CD4-positive, alpha-beta memory T cell (primary cell): ENCODE measurements at regions of chr2 and their contacts with region 1.

Region 1: GRCh38 chr2:9630749-9631483 is at the start of gene YWHAQ:
- DNase-seq: peak; percentile 97 to 98 (median 97)
- H3K4me3 ChIP-seq: peak within 1 kb of the TSS; percentile 45 to 86
- H3K4me3 Mint-ChIP-seq: peak within 1 kb of the TSS; percentile 94 to 98 (median 96)
- H3K27ac ChIP-seq: peak within 1 kb of the TSS; percentile 86
- H3K27ac Mint-ChIP-seq: peak within 1 kb of the TSS; percentile 96 to 98 (median 98)
- H3K4me1 ChIP-seq: peaks cover 46% of the 10 kb centered on the region
- H3K4me1 Mint-ChIP-seq: peaks cover 37 to 58% (median 46%) of the 10 kb centered on the region in 4 donors
- H3K27me3 ChIP-seq: no peaks in the 10 kb centered on the region
- H3K27me3 Mint-ChIP-seq: no peaks in the 10 kb centered on the region
- total RNA-seq, gene YWHAQ: 124 TPM

Region 2: DNA sequence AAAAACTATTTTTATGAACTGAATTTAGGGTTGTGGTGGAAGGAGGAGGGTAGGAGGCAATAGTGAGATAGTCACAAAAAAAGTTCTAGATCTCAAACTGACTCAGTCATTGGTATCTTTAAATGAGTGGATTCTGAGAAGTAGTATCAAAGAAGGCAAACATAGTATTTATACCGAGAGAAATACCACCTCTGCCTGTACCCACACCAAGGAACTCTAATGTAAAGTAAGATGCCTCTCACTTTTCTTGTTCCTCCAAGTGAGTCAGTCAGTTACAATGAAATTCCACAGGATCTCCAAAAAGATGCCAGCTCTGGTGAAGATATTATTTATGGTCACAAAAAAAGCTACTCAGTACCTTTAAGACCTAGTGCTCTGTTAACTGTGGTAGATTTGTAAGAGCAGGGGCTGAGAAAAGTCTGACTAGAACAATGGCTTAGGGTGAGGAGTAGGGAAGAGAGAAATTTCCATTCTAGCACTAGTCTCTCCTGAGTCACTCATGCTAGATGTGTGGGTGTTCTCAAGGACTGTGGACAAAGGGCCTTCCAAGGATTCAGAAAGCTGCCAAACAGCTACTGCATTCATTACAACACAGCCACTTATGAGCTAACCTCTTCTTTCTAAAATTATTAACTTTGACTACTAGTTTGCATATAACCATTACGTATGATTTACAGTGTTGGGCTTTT is 36.4 kb before region 1 on chr2:
- CTCF ChIA-PET with region 1: no interaction called
- POLR2A ChIA-PET with region 1: interaction called, 30 read pairs
- intact Hi-C with region 1: no loop called
- DNase-seq: no peak
- H3K4me3 ChIP-seq: no peak overlapping the region
- H3K4me3 Mint-ChIP-seq: peak overlapping the region in 6 of 8 donors; percentile 1 to 35 (median 16)
- H3K27ac ChIP-seq: peak overlapping the region; percentile 5
- H3K27ac Mint-ChIP-seq: peak overlapping the region; percentile 2 to 80 (median 52)
- H3K4me1 ChIP-seq: peaks cover 50% of the 10 kb centered on the region
- H3K4me1 Mint-ChIP-seq: peaks cover 38 to 68% (median 54%) of the 10 kb centered on the region in 4 donors
- H3K27me3 ChIP-seq: no peaks in the 10 kb centered on the region
- H3K27me3 Mint-ChIP-seq: no peaks in the 10 kb centered on the region

Region 3: DNA sequence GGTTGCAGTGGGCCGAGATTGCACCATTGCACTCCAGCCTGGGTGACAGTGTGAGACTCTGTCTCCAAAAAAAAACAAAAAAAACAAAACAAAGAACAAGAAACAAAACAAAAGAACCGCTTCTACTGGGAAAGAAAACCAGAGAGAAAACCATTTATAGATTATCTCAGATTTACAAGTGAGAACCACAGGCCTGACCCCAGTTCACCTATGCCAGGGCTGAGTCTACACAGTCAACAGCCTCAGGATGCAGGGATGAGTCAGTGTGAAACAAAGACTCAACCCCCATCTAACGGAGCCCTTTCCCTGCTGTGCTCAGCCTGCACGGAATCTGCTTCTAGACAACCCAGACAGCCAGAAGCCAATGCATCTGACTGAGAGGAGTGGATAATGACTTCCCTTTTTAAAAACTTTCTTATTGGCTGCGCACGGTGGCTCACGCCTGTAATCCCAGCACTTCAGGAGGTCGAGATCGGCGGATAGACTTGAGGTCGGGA is 25.4 kb after region 1 on chr2:
- CTCF ChIA-PET with region 1: no interaction called
- POLR2A ChIA-PET with region 1: interaction called, 11 read pairs
- intact Hi-C with region 1: loop called (anchors 2 kb)
- DNase-seq: peak; percentile 23 to 86 (median 30)
- H3K4me3 ChIP-seq: no peak overlapping the region
- H3K4me3 Mint-ChIP-seq: peak overlapping the region in 7 of 8 donors; percentile 35 to 78 (median 61)
- H3K27ac ChIP-seq: no peak overlapping the region
- H3K27ac Mint-ChIP-seq: peak overlapping the region; percentile 59 to 90 (median 87)
- H3K4me1 ChIP-seq: peaks cover 35% of the 10 kb centered on the region
- H3K4me1 Mint-ChIP-seq: peaks cover 17 to 45% (median 27%) of the 10 kb centered on the region in 4 donors
- H3K27me3 ChIP-seq: no peaks in the 10 kb centered on the region
- H3K27me3 Mint-ChIP-seq: no peaks in the 10 kb centered on the region

Region 4: GRCh38 chr2:9739531-9739964 is 108.6 kb after region 1 on chr2:
- CTCF ChIA-PET with region 1: no interaction called
- POLR2A ChIA-PET with region 1: interaction called, 27 read pairs
- intact Hi-C with region 1: loop called (anchors 2 kb)
- DNase-seq: peak; percentile 48 to 70 (median 54)
- H3K4me3 ChIP-seq: peak overlapping the region in 1 of 2 donors; percentile 27
- H3K4me3 Mint-ChIP-seq: peak overlapping the region; percentile 73 to 97 (median 87)
- H3K27ac ChIP-seq: peak overlapping the region; percentile 62
- H3K27ac Mint-ChIP-seq: peak overlapping the region; percentile 87 to 99 (median 96)
- H3K4me1 ChIP-seq: peaks cover 49% of the 10 kb centered on the region
- H3K4me1 Mint-ChIP-seq: peaks cover 34 to 70% (median 48%) of the 10 kb centered on the region in 4 donors
- H3K27me3 ChIP-seq: no peaks in the 10 kb centered on the region
- H3K27me3 Mint-ChIP-seq: no peaks in the 10 kb centered on the region

Region 5: GRCh38 chr2:9782197-9782719 is 151.3 kb after region 1 on chr2:
- CTCF ChIA-PET with region 1: interaction called, 5 read pairs
- POLR2A ChIA-PET with region 1: interaction called, 37 read pairs
- intact Hi-C with region 1: loop called (anchors 1 kb)
- DNase-seq: peak; percentile 82 to 94 (median 87)
- H3K4me3 ChIP-seq: peak overlapping the region; percentile 2 to 19
- H3K4me3 Mint-ChIP-seq: peak overlapping the region; percentile 64 to 78 (median 72)
- H3K27ac ChIP-seq: peak overlapping the region; percentile 89
- H3K27ac Mint-ChIP-seq: peak overlapping the region; percentile 95 to 100 (median 99)
- H3K4me1 ChIP-seq: peaks cover 58% of the 10 kb centered on the region
- H3K4me1 Mint-ChIP-seq: peaks cover 38 to 79% (median 60%) of the 10 kb centered on the region in 4 donors
- H3K27me3 ChIP-seq: no peaks in the 10 kb centered on the region
- H3K27me3 Mint-ChIP-seq: no peaks in the 10 kb centered on the region